Activated CD4-positive, alpha-beta T cell treated with anti-CD3 and anti-CD28 coated beads for 36 hours (primary cell): ENCODE measurements at regions of chr3 and their contacts with region 1.

Region 1: GRCh38 chr3:186259612-186260383 is 102.2 kb downstream of the DGKG start:
- DNase-seq: peak; percentile 86
- ATAC-seq: peak; percentile 89
- H3K4me3 Mint-ChIP-seq: peak overlapping the region; percentile 40
- H3K27ac Mint-ChIP-seq: peak overlapping the region; percentile 68
- H3K4me1 Mint-ChIP-seq: peaks cover 28% of the 10 kb centered on the region
- H3K27me3 Mint-ChIP-seq: no peaks in the 10 kb centered on the region

Region 2: DNA sequence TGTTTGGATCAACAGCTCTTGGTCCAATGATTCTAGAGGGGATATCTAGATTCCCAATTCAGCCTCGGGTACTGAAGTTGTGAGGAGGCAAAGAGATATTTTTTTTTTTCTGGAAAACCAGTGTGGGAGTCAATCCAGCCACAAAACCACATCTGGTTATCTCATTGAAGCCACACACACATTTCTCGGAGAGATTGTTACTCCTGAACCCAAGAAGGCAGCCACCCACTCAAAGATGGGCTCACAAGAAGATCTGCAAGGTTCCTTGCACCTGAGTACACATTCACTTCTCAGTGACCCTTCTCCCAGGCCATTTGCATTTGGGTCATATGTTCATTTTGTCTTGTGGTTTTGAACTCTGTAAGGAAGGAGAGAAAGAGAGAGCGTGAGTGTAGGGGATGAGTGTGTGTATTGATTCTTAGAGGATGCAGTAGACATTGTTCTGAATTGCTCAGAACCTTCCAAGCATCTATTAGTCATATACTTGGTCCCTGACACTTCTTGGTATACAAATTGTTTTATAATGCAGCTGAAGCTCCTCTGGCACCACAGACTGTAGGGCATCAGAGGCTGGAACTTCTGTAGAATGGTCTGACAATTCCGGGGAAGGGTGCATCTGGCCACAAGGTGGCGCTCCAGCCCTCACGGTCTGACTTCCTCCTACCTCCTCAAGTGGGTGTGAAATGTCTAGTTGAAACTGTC is 282.7 kb before region 1 on chr3:
- CTCF ChIA-PET with region 1: interaction called, 7 read pairs
- POLR2A ChIA-PET with region 1: no interaction called
- intact Hi-C with region 1: loop called in 1 of 2 experiments (anchors 5 kb)
- DNase-seq: peak; percentile 93
- ATAC-seq: peak; percentile 91
- H3K4me3 Mint-ChIP-seq: no peak overlapping the region
- H3K27ac Mint-ChIP-seq: peak overlapping the region; percentile 11
- H3K4me1 Mint-ChIP-seq: peaks cover 18% of the 10 kb centered on the region
- H3K27me3 Mint-ChIP-seq: no peaks in the 10 kb centered on the region

Region 3: GRCh38 chr3:186241910-186242821 is 17.6 kb before region 1 on chr3:
- CTCF ChIA-PET with region 1: interaction called, 7 read pairs
- POLR2A ChIA-PET with region 1: no interaction called
- intact Hi-C with region 1: loop called in 1 of 2 experiments (anchors 1 kb)
- DNase-seq: peak; percentile 84
- ATAC-seq: peak; percentile 97
- H3K4me3 Mint-ChIP-seq: peak overlapping the region; percentile 30
- H3K27ac Mint-ChIP-seq: no peak overlapping the region
- H3K4me1 Mint-ChIP-seq: peaks cover 9% of the 10 kb centered on the region
- H3K27me3 Mint-ChIP-seq: peaks cover 9% of the 10 kb centered on the region

Region 4: DNA sequence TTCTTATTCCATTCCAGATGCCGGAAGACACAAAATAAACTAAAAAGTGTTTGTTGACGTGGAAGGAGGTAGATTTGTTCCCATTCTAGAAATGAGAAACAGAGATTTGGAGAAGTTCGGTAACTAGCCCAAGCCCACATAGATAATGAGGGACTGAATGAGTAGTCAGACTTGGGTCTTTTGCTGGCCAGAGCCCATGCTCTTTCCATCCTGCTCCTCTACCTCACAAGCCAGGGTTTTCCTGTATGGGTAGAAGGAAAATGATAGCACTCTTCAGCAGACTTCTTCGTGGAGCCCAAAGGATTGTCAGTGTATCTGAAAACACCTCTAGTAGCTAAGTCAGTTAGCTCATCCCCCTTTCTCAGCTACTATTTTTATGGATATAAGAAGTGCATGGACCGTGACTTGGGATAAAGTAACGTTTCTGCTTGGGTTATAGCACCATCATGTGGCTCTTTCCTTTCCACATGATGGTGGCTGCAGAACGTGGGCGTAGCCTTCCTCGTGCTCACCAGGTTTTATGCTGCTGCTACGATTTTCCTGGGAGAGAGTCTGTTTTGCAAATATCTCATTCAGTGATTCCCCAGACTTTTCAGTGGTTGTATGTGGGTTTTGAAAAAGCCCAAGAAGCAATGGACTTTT is 17.6 kb after region 1 on chr3:
- CTCF ChIA-PET with region 1: no interaction called
- POLR2A ChIA-PET with region 1: no interaction called
- intact Hi-C with region 1: no loop called
- DNase-seq: peak; percentile 16
- ATAC-seq: no peak
- H3K4me3 Mint-ChIP-seq: no peak overlapping the region
- H3K27ac Mint-ChIP-seq: no peak overlapping the region
- H3K4me1 Mint-ChIP-seq: peaks cover 5% of the 10 kb centered on the region
- H3K27me3 Mint-ChIP-seq: peaks cover 5% of the 10 kb centered on the region

Region 5: DNA sequence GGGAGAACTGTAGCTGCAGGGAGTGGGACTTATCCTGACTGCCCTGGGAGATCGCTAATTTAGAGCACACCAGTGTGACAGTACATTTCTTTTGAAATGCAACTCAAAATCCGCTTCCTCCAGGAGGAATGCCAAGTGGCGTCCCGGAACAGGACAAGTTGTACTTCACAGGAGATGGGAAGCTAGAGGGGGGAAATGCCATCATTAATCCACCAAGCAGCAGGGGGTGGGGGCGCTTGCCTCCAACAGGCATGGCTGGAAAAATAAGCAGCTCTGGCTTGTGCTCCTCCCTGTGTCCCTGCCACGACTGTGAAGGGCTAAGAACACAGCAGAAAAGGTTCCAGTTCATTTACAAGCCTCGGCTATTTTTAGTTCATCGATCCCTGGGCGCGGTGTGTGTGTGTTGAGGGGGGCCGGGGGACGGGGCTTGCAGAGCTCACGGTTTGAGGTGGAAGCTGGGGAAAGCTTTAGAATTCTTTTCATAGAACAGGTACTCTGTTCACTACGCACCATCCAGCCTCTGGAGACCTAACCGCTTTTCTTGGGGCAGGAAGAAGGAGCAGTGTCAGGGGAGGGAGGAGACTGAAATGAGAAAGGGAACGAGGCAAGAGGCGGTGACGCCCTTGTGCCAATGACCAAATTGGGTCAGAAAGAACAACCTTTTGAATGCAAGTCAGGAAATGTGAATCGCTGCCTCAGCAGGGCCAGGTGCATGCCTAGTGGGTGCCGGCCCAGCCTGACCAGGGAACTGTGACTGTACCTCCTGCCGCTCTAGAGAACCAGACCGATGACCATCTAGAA is 154.0 kb after region 1 on chr3:
- CTCF ChIA-PET with region 1: interaction called, 3 read pairs
- POLR2A ChIA-PET with region 1: no interaction called
- intact Hi-C with region 1: loop called in 1 of 2 experiments (anchors 2 kb)
- DNase-seq: peak; percentile 56
- ATAC-seq: peak; percentile 13
- H3K4me3 Mint-ChIP-seq: peak overlapping the region; percentile 51
- H3K27ac Mint-ChIP-seq: peak overlapping the region; percentile 17
- H3K4me1 Mint-ChIP-seq: peaks cover 54% of the 10 kb centered on the region
- H3K27me3 Mint-ChIP-seq: peaks cover 5% of the 10 kb centered on the region

Region 6: DNA sequence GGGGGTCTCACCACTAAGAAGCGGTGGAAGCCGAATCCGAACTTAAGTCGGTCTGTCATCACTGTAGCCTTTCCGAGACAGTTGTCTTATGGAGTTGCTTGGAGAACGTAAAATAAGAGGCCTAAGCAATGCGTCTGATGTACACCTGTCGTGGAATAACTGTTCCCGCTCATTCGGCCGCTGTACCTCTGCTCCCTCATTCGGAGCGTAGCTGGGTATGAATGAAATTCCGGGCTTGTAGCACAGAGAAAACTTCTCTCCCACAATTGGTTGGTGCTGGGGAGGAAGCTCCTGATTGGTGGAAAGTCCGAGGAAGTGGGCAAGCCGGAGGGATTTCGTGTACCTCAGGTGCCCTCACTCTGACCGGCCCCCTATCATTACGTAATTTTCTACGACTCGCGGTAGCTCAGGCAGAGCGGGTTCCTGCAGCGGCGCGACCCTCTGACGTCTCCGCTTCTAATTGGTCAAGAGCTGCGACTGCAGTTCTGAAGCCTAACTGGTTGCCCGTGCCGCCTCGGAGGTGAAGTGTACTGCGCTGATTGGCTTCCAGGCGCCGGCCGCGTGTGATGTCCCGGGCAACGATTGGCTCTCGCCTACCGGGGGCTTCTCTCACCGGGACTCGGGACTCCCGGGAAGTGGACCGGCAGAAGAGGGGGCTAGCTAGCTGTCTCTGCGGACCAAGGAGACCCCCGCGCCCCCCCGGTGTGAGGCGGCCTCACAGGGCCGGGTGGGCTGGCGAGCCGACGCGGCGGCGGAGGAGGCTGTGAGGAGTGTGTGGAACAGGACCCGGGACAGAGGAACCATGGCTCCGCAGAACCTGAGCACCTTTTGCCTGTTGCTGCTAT is 310.5 kb after region 1 on chr3 and contains the start of gene DNAJB11:
- CTCF ChIA-PET with region 1: no interaction called
- POLR2A ChIA-PET with region 1: no interaction called
- intact Hi-C with region 1: loop called in 1 of 2 experiments (anchors 1 kb)
- DNase-seq: peak; percentile 100
- ATAC-seq: peak; percentile 92
- H3K4me3 Mint-ChIP-seq: peak within 1 kb of the TSS; percentile 93
- H3K27ac Mint-ChIP-seq: peak within 1 kb of the TSS; percentile 95
- H3K4me1 Mint-ChIP-seq: peaks cover 50% of the 10 kb centered on the region
- H3K27me3 Mint-ChIP-seq: no peaks in the 10 kb centered on the region
- total RNA-seq, gene DNAJB11: 30.9 to 36.6 TPM

Region 7: DNA sequence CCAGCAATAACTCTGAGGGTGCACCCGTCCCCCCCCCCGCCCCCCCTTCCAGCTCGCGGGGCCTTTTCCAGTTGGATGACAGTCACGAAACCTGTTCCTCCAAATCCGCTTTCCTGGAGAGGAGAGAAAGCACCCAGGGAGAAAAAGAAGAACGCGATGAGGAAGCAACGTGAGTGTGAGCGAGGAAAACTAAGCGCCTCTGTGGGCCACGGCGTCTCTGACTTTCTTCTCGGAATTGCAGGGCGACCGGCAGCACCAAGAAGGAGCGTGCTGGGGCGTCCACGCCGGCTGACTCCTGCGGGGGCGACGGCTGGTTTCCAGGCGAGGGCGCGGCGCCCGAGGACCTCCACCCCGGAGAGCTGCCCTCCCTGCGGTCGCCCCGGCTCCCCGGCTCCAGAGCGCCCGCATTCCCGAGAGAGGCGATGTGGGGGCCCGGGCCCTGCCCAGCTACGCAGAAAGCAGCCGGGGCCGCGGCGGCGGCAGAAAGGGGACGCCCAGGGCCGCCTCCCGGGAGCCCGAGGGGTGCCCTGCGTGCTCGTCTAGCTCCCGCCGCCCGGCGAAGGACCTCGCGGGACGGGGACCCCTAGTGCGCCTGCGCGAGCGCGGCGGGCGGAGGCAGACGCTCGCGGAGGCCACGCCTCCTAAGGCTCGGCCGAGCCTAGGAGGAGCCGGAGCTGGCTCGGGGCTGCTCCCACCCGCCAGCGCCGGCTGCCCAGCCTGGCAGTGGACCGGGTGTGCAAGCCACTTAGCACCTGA is 567.4 kb after region 1 on chr3:
- CTCF ChIA-PET with region 1: no interaction called
- POLR2A ChIA-PET with region 1: no interaction called
- intact Hi-C with region 1: loop called in 1 of 2 experiments (anchors 10 kb)
- DNase-seq: peak; percentile 91
- ATAC-seq: peak; percentile 83
- H3K4me3 Mint-ChIP-seq: peak overlapping the region; percentile 82
- H3K27ac Mint-ChIP-seq: no peak overlapping the region
- H3K4me1 Mint-ChIP-seq: peaks cover 23% of the 10 kb centered on the region
- H3K27me3 Mint-ChIP-seq: peaks cover 31% of the 10 kb centered on the region